GM12878 (cell line): ENCODE measurements at regions of chr13 and their contacts with region 1.

Region 1: GRCh38 chr13:42991892-42992763 is at the start of gene EPSTI1:
- DNase-seq: no peak
- ATAC-seq: peak; percentile 82
- H3K4me3 ChIP-seq: peak within 1 kb of the TSS; percentile 86
- H3K27ac ChIP-seq: peak within 1 kb of the TSS; percentile 99
- H3K4me1 ChIP-seq: peaks cover 28% of the 10 kb centered on the region
- H3K27me3 ChIP-seq: no peaks in the 10 kb centered on the region
- CTCF ChIP-seq: no peak
- EP300 ChIP-seq: peak in 1 of 2 experiments; percentile 67; a peak in 1 of 4 replicates
- POLR2A ChIP-seq: peak; percentile 85
- RAD21 ChIP-seq: no peak
- polyA plus RNA-seq, gene EPSTI1: 4.7 to 8.9 TPM

Region 2: DNA sequence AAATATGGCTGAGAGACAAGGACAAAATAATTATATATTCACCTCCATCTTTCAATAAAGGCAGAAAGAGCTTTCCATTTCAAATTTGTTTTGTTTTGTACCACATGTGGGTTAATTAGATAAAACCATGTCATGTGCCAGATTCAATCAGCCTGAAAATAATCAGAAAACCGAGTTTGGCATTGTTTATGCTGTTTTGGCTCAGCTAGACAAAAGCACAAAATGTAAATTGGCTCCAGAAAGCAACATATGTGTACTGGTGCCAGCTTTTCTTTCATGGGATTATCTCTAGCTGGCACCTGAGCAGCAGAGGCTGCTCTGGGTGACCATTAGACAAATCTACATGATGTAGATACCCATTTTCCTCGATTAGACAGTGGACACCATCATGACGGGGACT is 22.0 kb after region 1 on chr13:
- CTCF ChIA-PET with region 1: no interaction called
- POLR2A ChIA-PET with region 1: no interaction called
- RAD21 ChIA-PET with region 1: interaction called, 3 read pairs
- SMC1A ChIA-PET with region 1: interaction called, 13 read pairs
- in situ Hi-C with region 1: no loop called
- intact Hi-C with region 1: no loop called
- DNase-seq: no peak
- ATAC-seq: no peak
- H3K4me3 ChIP-seq: no peak overlapping the region
- H3K27ac ChIP-seq: no peak overlapping the region
- H3K4me1 ChIP-seq: no peaks in the 10 kb centered on the region
- H3K27me3 ChIP-seq: no peaks in the 10 kb centered on the region
- CTCF ChIP-seq: no peak
- EP300 ChIP-seq: no peak
- POLR2A ChIP-seq: no peak
- RAD21 ChIP-seq: no peak

Region 3: GRCh38 chr13:43041369-43041921 is 49.3 kb after region 1 on chr13:
- CTCF ChIA-PET with region 1: interaction called, 7 read pairs
- POLR2A ChIA-PET with region 1: interaction called, 3 read pairs
- RAD21 ChIA-PET with region 1: interaction called, 6 read pairs
- SMC1A ChIA-PET with region 1: interaction called, 17 read pairs
- in situ Hi-C with region 1: no loop called
- intact Hi-C with region 1: loop called (anchors 1 kb)
- DNase-seq: no peak
- ATAC-seq: peak; percentile 65
- H3K4me3 ChIP-seq: no peak overlapping the region
- H3K27ac ChIP-seq: peak overlapping the region; percentile 41
- H3K4me1 ChIP-seq: peaks cover 48% of the 10 kb centered on the region
- H3K27me3 ChIP-seq: no peaks in the 10 kb centered on the region
- CTCF ChIP-seq: no peak
- EP300 ChIP-seq: no peak
- POLR2A ChIP-seq: no peak
- RAD21 ChIP-seq: no peak

Region 4: GRCh38 chr13:43074824-43075510 is 82.8 kb after region 1 on chr13:
- CTCF ChIA-PET with region 1: interaction called, 4 read pairs
- POLR2A ChIA-PET with region 1: interaction called, 4 read pairs
- RAD21 ChIA-PET with region 1: interaction called, 51 read pairs
- SMC1A ChIA-PET with region 1: interaction called, 13 read pairs
- in situ Hi-C with region 1: no loop called
- intact Hi-C with region 1: no loop called
- DNase-seq: no peak
- ATAC-seq: peak; percentile 90
- H3K4me3 ChIP-seq: peak overlapping the region; percentile 9; the same call in 1 of the 2 replicates
- H3K27ac ChIP-seq: peak overlapping the region; percentile 60
- H3K4me1 ChIP-seq: peaks cover 36% of the 10 kb centered on the region
- H3K27me3 ChIP-seq: no peaks in the 10 kb centered on the region
- CTCF ChIP-seq: no peak
- EP300 ChIP-seq: peak in 1 of 2 experiments; percentile 56; a peak in 2 of 4 replicates
- POLR2A ChIP-seq: no peak
- RAD21 ChIP-seq: no peak

Region 5: DNA sequence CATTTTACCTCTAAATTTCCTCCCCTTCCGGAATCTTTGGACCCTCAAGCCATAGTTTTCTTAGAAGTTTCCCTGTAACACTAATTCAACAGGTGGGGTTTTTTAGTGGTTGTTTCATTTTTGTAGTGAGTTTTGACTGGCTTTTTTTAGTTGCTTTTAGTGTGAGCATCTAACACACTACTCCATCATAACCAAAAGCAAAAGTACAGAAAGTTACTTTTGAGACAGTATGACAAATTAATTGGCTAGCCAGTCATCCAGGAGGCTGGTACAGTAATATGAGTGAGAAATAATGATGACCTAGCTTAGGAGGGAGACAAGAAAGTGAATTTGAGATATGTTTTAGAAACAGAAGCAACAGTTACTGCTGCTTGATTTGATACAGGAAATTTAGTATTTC is 102.8 kb after region 1 on chr13:
- CTCF ChIA-PET with region 1: no interaction called
- POLR2A ChIA-PET with region 1: no interaction called
- RAD21 ChIA-PET with region 1: interaction called, 12 read pairs
- SMC1A ChIA-PET with region 1: interaction called, 12 read pairs
- in situ Hi-C with region 1: no loop called
- intact Hi-C with region 1: no loop called
- DNase-seq: peak; percentile 47
- ATAC-seq: peak; percentile 98
- H3K4me3 ChIP-seq: 0 out of 2 replicates have a peak overlapping the region, but pooled peaks have one; percentile 30
- H3K27ac ChIP-seq: peak overlapping the region; percentile 54
- H3K4me1 ChIP-seq: peaks cover 11% of the 10 kb centered on the region
- H3K27me3 ChIP-seq: no peaks in the 10 kb centered on the region
- CTCF ChIP-seq: no peak
- EP300 ChIP-seq: peak in 1 of 2 experiments; percentile 40; a peak in 1 of 4 replicates
- POLR2A ChIP-seq: no peak
- RAD21 ChIP-seq: no peak